ENCODE measurements at regions of chr7 and their contacts with region 1.

Region 1: DNA sequence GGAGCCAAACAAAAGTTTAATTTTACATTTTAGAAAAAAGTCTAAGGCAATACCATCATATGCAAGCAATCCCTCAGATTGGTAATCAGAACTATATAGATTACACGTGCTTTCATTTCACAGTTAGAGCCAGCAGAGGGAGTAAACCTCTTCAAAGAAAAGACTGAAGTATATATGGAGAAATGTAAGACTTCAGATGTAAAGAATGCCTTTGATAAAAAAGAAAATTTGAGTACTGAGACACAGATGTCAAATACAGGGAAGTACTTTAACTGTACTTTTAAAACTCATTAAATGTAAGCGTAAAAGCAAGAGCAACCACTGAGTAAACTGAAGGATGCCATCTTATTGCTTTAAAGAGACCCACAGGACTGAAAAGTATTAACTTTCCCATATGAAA is 101.4 kb upstream of the FAM133B start:
- DNase-seq: no peak
- ATAC-seq: peak; percentile 50 to 58
- H3K4me3 ChIP-seq: no peak overlapping the region
- H3K27ac ChIP-seq: no peak overlapping the region
- H3K4me1 ChIP-seq: peaks cover 7% of the 10 kb centered on the region
- H3K27me3 ChIP-seq: no peaks in the 10 kb centered on the region
- CTCF ChIP-seq: peak; percentile 58

Region 2: GRCh38 chr7:92833024-92833765 is 141.6 kb after region 1 on chr7:
- intact Hi-C with region 1: loop called (anchors 10 kb)
- DNase-seq: peak; percentile 92
- ATAC-seq: peak; percentile 91 to 92
- H3K4me3 ChIP-seq: peak overlapping the region; percentile 83
- H3K27ac ChIP-seq: peak overlapping the region; percentile 84
- H3K4me1 ChIP-seq: peaks cover 27% of the 10 kb centered on the region
- H3K27me3 ChIP-seq: no peaks in the 10 kb centered on the region
- CTCF ChIP-seq: peak; percentile 84

Measured in lower lobe of right lung (tissue), 2 donors.